ENCODE measurements at regions of chr16 and their contacts with region 1.

Region 1: GRCh38 chr16:56657555-56658326 is at the start of gene MT1F:
- DNase-seq: peak; percentile 59 to 73
- ATAC-seq: peak; percentile 73 to 91 (median 83)
- H3K4me3 ChIP-seq: peak within 1 kb of the TSS; percentile 44 to 75 (median 62)
- H3K27ac ChIP-seq: peak within 1 kb of the TSS in 5 of 10 donors; percentile 2 to 88 (median 40)
- H3K4me1 ChIP-seq: peaks cover 0 to 24% (median 14%) of the 10 kb centered on the region in 9 donors
- H3K27me3 ChIP-seq: peaks cover 0 to 41% (median 22%) of the 10 kb centered on the region in 7 donors
- CTCF ChIP-seq: no peak
- total RNA-seq, gene MT1F: 0.98 to 7.7 (median 2.4) TPM

Region 2: DNA sequence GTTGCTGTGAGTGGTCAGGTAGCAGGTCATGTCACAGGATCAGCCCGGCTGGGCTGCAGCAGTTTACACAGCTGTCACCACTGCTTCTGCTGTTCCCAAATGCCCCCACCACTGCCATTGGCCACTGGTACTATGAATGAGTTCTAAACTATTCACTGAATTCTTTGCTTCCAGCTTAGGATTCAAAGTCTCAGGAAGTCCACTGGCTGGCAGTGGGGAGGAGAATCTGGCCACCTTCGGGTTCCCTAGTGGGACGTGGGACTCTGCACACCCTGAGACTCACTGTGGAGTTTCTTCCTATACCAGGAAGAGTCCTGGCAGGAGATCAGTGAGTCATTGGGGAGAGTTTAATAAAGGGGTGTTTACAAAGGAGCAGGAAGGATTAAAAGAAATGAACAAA is 31.4 kb after region 1 on chr16:
- intact Hi-C with region 1: loop called in 1 of 10 experiments (anchors 1 kb)
- DNase-seq: no peak
- ATAC-seq: no peak
- H3K4me3 ChIP-seq: no peak overlapping the region
- H3K27ac ChIP-seq: no peak overlapping the region
- H3K4me1 ChIP-seq: peaks cover 0 to 22% (median 9%) of the 10 kb centered on the region in 9 donors
- H3K27me3 ChIP-seq: no peaks in the 10 kb centered on the region
- CTCF ChIP-seq: no peak

Region 3: DNA sequence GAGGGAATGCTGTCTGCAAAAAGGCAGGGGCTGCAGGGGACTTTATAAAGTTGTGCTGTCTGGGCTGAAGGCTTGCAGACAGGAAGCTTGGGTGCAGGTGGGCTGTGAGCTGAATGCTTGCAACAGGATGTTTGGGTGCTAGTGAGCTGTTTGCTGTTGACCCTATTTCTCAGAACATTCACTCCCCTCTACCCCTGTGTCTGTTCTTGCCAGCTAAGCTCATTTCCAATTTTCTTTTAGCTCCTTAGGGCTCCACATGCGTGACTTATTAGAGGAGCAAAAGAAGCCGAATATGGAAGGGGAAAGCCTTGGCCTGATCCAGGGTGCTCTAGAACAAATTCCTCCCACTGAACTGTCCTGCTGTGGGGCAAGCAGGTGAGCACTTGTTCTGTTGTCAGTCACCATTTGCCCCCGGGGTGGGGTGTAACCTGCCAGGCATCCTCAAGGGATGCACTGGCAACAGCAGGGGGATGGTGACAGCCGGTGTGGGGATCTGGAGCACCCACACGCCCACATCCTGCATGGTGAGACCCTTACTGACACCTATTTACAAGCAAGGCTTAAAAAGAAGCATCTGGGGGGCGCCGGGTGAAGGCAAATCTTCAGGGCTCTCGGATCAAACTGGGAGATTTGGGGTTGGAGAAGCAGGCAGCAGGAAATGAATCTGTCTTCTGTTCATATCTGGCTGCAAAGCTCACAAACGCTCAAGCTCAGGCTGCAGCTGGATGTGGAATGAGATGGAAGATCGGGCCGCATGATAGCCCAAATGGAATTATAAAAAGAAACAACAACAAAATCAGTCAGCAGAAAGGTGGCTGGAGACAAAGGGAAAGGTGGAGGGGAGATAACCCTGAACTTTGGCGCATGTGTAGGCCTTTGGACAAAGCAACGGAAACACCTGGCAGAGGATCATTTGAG is 51.0 kb after region 1 on chr16:
- intact Hi-C with region 1: no loop called
- DNase-seq: no peak
- ATAC-seq: no peak
- H3K4me3 ChIP-seq: no peak overlapping the region
- H3K27ac ChIP-seq: peak overlapping the region in 1 of 10 donors; percentile 64
- H3K4me1 ChIP-seq: no peaks in the 10 kb centered on the region
- H3K27me3 ChIP-seq: no peaks in the 10 kb centered on the region
- CTCF ChIP-seq: no peak

Region 4: DNA sequence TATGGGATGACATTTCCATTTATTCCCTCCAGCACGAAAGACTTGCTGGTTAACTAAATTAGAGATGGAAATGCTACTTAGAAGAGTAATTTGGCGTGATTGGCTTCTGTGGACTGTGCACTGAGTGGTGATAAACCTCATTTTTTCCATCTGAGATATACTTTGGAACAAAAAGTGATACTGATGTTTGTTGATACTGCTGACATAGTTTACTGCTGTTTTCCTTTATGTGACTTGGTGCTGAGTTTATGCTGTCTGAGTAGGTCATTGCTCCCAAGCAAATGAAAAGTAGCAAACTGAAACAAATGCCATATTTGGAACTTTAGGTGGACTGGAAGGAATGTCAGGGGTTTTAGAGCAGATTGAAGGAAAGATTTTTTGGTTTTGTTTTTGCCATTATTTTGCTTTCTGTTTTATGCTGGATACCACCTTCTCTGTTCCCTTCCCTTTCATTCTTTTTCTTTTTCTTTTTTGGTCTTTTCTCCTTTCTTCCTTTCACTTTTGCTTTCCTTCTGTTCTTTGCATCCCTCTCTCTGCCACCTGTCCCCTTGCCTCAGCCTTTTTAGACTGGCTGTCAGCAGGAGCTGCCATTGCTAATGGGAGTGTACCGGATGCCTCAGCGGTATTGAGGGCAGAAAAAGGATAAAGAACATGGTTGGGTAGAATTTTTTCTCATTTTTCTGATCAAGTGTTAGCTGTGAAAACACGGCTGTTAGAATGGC is 114.0 kb after region 1 on chr16:
- intact Hi-C with region 1: no loop called
- DNase-seq: no peak
- ATAC-seq: no peak
- H3K4me3 ChIP-seq: no peak overlapping the region
- H3K27ac ChIP-seq: no peak overlapping the region
- H3K4me1 ChIP-seq: peaks cover 0 to 23% (median 10%) of the 10 kb centered on the region in 9 donors
- H3K27me3 ChIP-seq: no peaks in the 10 kb centered on the region
- CTCF ChIP-seq: no peak

Region 5: GRCh38 chr16:57077714-57078113 is 420.0 kb after region 1 on chr16:
- intact Hi-C with region 1: loop called in 1 of 10 experiments (anchors 5 kb)
- DNase-seq: no peak
- ATAC-seq: peak in 2 of 8 donors; percentile 14 to 27
- H3K4me3 ChIP-seq: no peak overlapping the region
- H3K27ac ChIP-seq: no peak overlapping the region
- H3K4me1 ChIP-seq: no peaks in the 10 kb centered on the region
- H3K27me3 ChIP-seq: no peaks in the 10 kb centered on the region
- CTCF ChIP-seq: no peak